ENCODE measurements at regions of chr18 and their contacts with region 1.

Region 1: DNA sequence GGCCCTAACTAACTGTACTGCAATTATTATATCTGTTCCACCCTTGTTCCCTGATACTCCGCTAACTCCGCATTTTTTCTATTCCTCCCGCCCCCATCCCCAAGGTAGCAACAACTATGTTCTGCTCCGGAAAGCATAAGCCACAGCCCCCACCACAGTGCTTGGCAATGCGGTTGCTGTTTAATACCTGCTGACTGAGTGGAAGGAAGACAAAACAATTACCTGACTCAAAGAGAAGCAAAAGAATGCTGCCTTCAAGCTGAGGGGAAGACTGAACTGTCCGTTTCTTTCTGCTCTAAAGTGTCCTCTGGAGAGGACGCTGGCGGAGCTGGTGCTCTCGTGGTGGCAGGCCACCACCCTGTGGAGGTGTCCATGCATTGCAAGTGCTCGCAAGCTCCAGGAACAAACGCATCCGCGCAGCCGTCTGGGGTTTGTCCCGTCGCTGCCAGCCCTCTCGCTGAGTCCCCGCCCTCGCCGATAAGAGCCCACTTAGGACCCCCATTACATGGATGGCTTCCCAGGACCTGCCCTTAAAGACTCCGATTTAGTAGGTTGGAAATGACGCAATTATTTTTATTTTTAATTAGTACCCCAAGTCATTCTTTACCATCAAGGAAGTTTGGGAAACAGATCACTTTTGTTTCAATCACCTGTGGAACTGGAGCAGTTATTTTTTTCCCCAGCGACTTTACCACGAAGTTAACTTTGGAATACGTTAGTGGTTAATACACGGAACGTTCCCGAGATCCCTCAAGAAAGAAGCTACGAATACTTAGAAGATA is 1.6 kb upstream of the MYL12A start:
- DNase-seq: peak; percentile 78
- CTCF ChIP-seq: peak; percentile 94

Region 2: DNA sequence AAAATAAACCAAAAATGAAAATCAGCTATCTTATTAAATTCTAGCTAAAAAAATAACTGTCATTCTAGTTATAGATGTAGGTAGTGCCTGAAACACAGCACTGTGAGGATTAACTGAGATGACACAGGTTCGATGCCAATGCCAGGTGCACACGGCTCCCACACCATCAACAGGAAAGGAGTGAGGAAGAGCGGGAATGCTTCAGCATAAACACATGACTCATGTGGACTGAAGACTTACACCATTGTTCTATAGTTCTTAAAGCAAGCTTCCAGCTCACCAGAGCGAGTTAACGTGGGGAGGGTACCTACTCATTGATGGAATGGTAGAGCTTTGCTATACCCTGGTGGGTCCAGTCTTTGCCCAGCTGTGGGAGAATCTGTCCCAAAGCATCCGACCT is 322.6 kb before region 1 on chr18:
- CTCF ChIA-PET with region 1: interaction called, 12 read pairs
- POLR2A ChIA-PET with region 1: no interaction called
- DNase-seq: no peak
- CTCF ChIP-seq: no peak

Region 3: DNA sequence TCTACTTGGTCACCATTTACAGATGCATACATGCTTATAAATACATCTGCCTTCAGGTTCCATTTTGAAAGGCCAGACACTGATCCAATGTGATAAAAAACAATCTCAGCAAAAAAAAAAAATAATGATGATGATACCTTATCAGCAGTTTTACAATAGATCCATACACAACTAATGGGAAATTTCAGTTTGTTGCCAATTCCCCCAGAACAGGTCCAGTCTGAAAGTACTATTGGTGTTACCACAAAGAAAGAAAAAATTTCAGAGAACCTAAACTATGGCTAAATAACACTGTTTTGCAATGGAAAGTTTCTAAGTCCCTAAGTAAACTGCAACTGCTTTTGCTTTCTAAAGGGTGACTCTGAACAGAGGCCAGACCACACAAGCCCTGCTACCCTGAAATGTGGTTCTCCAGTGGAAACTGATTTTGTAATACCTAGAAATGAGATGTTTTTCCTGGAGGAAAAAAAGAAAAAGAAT is 287.2 kb before region 1 on chr18:
- CTCF ChIA-PET with region 1: interaction called, 15 read pairs
- POLR2A ChIA-PET with region 1: interaction called, 4 read pairs
- DNase-seq: peak; percentile 46
- CTCF ChIP-seq: no peak

Region 4: DNA sequence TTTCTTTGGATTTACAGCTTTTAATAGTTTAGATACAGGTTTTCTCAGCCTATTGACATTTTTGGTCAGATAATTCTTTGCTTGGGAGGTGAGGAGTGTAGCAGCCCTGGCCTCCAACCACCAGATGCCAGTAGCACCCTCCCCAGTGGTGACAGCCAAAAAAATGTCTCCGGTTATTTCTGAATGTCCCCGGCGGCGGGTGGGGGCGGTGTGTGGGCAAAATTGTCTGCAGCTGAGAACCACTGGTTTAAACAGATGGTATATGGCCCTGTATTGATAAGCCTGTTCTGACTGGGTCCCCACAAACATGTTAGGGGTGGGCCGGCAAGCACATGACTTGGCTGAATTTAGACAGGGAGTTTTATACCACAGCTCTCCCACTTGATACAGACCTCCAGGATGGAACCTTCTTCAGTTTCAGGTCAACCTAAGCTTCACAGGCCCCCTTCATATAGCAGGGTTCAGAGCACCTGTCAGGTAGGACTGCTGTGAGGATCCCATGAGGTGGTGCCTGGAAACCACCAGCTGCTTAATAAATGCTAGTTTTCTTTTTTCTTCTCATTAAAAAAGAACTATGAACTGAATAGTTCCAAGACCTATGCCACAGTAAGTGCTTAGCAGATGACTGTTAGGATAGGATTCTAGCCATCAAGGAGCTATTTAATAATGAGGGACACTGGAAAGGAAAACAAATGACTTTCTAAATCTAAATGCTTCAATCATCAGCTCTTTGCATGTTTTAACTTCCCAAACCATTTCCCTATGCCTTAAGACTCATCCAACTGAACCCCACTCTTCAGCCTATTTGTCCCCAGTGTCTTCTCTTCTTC is 251.2 kb before region 1 on chr18:
- CTCF ChIA-PET with region 1: interaction called, 42 read pairs
- POLR2A ChIA-PET with region 1: interaction called, 5 read pairs
- DNase-seq: peak; percentile 60
- CTCF ChIP-seq: peak; percentile 68

Region 5: DNA sequence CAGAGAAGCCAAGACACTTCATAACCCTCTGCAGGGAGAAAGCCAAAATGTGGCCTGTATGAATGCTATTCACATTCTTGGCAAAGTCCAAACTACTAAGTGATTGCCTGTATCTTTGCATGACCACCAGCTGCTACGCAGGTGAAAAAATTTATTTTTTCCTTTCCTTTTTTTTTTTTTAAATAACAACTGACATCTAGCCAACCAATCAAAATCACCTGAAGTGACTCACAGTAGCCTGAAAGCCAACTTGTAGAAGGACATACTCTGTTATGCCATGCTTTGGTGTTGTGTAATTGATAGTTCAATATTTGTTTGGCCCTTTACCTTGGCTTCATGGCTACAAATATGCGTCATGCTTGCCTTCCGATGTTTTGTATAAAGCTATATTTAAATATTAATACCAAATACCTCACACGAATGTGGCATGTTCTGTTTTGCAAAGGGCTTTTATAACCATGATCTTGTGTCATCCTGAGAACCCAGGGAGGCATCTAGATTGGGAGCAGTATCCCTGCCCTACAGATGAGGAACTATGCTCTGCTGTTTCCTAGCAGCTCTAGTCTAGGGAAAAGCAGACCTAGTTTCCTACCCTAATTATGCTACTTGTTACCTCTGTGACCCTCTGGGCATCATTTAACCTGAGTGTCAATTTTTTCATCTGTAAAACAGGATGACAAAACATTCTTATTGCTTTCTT is 128.4 kb before region 1 on chr18:
- CTCF ChIA-PET with region 1: no interaction called
- POLR2A ChIA-PET with region 1: no interaction called
- DNase-seq: no peak
- CTCF ChIP-seq: no peak

Region 6: GRCh38 chr18:3151399-3152264 is 94.4 kb before region 1 on chr18:
- CTCF ChIA-PET with region 1: interaction called, 31 read pairs
- POLR2A ChIA-PET with region 1: no interaction called
- DNase-seq: peak; percentile 65
- CTCF ChIP-seq: peak; percentile 71

Region 7: GRCh38 chr18:3217948-3218647 is 27.9 kb before region 1 on chr18:
- CTCF ChIA-PET with region 1: interaction called, 21 read pairs
- POLR2A ChIA-PET with region 1: no interaction called
- DNase-seq: no peak
- CTCF ChIP-seq: no peak

Region 8: GRCh38 chr18:3380384-3380961 is 134.4 kb after region 1 on chr18:
- CTCF ChIA-PET with region 1: no interaction called
- POLR2A ChIA-PET with region 1: no interaction called
- DNase-seq: no peak
- CTCF ChIP-seq: no peak

Region 9: GRCh38 chr18:3593904-3594661 is 348.0 kb after region 1 on chr18:
- CTCF ChIA-PET with region 1: interaction called, 15 read pairs
- POLR2A ChIA-PET with region 1: no interaction called
- DNase-seq: peak; percentile 75
- CTCF ChIP-seq: peak; percentile 95

Measured in GM10248 (cell line).